ENCODE measurements at regions of chr4 and their contacts with region 1.

Region 1: GRCh38 chr4:10063544-10064300 is 42.4 kb upstream of the SLC2A9 start:
- DNase-seq: peak; percentile 80
- H3K4me3 Mint-ChIP-seq: no peak overlapping the region
- H3K27ac Mint-ChIP-seq: no peak overlapping the region
- H3K4me1 Mint-ChIP-seq: no peaks in the 10 kb centered on the region
- H3K27me3 Mint-ChIP-seq: no peaks in the 10 kb centered on the region
- CTCF ChIP-seq: peak; percentile 58

Region 2: GRCh38 chr4:9762823-9763475 is 300.8 kb before region 1 on chr4:
- CTCF ChIA-PET with region 1: interaction called, 61 read pairs
- POLR2A ChIA-PET with region 1: no interaction called
- intact Hi-C with region 1: loop called (anchors 1 kb)
- DNase-seq: peak; percentile 81
- H3K4me3 Mint-ChIP-seq: no peak overlapping the region
- H3K27ac Mint-ChIP-seq: no peak overlapping the region
- H3K4me1 Mint-ChIP-seq: peaks cover 5% of the 10 kb centered on the region
- H3K27me3 Mint-ChIP-seq: peaks cover 28% of the 10 kb centered on the region
- CTCF ChIP-seq: peak; percentile 74

Region 3: GRCh38 chr4:9996319-9997110 is 67.2 kb before region 1 on chr4:
- CTCF ChIA-PET with region 1: no interaction called
- POLR2A ChIA-PET with region 1: no interaction called
- intact Hi-C with region 1: no loop called
- DNase-seq: peak; percentile 39
- H3K4me3 Mint-ChIP-seq: no peak overlapping the region
- H3K27ac Mint-ChIP-seq: peak overlapping the region; percentile 72
- H3K4me1 Mint-ChIP-seq: peaks cover 14% of the 10 kb centered on the region
- H3K27me3 Mint-ChIP-seq: no peaks in the 10 kb centered on the region
- CTCF ChIP-seq: no peak

Region 4: GRCh38 chr4:10013722-10014121 is 50.0 kb before region 1 on chr4:
- CTCF ChIA-PET with region 1: interaction called, 59 read pairs
- POLR2A ChIA-PET with region 1: interaction called, 6 read pairs
- intact Hi-C with region 1: loop called (anchors 1 kb)
- DNase-seq: peak; percentile 59
- H3K4me3 Mint-ChIP-seq: no peak overlapping the region
- H3K27ac Mint-ChIP-seq: no peak overlapping the region
- H3K4me1 Mint-ChIP-seq: peaks cover 17% of the 10 kb centered on the region
- H3K27me3 Mint-ChIP-seq: no peaks in the 10 kb centered on the region
- CTCF ChIP-seq: peak; percentile 52

Region 5: GRCh38 chr4:10018818-10019461 is 44.8 kb before region 1 on chr4:
- CTCF ChIA-PET with region 1: interaction called, 59 read pairs
- POLR2A ChIA-PET with region 1: interaction called, 6 read pairs
- intact Hi-C with region 1: loop called (anchors 1 kb)
- DNase-seq: peak; percentile 98
- H3K4me3 Mint-ChIP-seq: peak overlapping the region; percentile 80
- H3K27ac Mint-ChIP-seq: peak overlapping the region; percentile 97
- H3K4me1 Mint-ChIP-seq: peaks cover 48% of the 10 kb centered on the region
- H3K27me3 Mint-ChIP-seq: no peaks in the 10 kb centered on the region
- CTCF ChIP-seq: peak; percentile 99

Region 6: DNA sequence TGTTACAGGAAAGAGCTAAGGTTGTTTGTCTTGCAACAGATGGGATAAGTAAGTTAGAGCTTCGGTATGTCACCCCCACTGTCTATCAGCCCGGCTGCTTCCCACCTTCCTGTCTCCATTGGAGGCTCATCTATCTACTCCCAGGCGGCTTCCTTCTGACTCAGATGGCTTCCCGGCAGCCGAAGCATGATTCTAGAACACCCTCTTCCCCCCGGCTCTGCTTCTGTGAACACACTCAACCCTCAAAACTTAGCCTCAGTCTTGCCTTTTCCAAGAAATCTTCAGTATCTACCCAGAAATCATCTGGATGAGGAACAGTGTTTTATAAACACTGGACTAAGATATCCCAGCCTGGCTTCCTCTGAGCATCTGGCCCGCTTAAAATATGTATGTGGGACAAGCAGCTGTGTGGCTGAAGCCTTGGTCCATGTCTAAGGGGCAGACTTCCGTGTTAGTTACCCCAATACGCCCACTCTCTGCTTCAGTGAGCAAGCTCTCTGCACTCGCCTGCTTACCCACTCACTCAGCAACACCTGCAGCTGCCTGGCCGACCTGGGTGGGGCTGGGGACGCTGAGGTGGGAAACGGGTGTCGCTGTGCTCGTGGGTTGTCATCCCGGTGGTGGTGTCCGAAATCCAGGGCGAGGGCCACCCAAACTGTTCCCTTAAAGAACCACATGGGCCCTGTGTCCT is 30.4 kb before region 1 on chr4:
- CTCF ChIA-PET with region 1: interaction called, 13 read pairs
- POLR2A ChIA-PET with region 1: interaction called, 3 read pairs
- intact Hi-C with region 1: no loop called
- DNase-seq: peak; percentile 67
- H3K4me3 Mint-ChIP-seq: no peak overlapping the region
- H3K27ac Mint-ChIP-seq: no peak overlapping the region
- H3K4me1 Mint-ChIP-seq: peaks cover 27% of the 10 kb centered on the region
- H3K27me3 Mint-ChIP-seq: no peaks in the 10 kb centered on the region
- CTCF ChIP-seq: no peak

Measured in MCF 10A (cell line).